K562 (cell line): ENCODE measurements at regions of chr19 and their contacts with region 1.

Region 1: GRCh38 chr19:40370997-40371801 is 18.8 kb downstream of the HIPK4 start:
- DNase-seq: peak; percentile 89 to 92 (median 90)
- ATAC-seq: peak; percentile 99
- H3K4me3 ChIP-seq: no peak overlapping the region
- H3K27ac ChIP-seq: peak overlapping the region; percentile 31; the same call in 2 of the 3 replicates
- H3K4me1 ChIP-seq: peaks cover 27 to 46% of the 10 kb centered on the region in 2 experiments
- H3K27me3 ChIP-seq: no peaks in the 10 kb centered on the region
- CTCF ChIP-seq: no peak
- EP300 ChIP-seq: no peak; the same call in 1 of the 2 replicates
- POLR2A ChIP-seq: no peak
- RAD21 ChIP-seq: no peak

Region 2: DNA sequence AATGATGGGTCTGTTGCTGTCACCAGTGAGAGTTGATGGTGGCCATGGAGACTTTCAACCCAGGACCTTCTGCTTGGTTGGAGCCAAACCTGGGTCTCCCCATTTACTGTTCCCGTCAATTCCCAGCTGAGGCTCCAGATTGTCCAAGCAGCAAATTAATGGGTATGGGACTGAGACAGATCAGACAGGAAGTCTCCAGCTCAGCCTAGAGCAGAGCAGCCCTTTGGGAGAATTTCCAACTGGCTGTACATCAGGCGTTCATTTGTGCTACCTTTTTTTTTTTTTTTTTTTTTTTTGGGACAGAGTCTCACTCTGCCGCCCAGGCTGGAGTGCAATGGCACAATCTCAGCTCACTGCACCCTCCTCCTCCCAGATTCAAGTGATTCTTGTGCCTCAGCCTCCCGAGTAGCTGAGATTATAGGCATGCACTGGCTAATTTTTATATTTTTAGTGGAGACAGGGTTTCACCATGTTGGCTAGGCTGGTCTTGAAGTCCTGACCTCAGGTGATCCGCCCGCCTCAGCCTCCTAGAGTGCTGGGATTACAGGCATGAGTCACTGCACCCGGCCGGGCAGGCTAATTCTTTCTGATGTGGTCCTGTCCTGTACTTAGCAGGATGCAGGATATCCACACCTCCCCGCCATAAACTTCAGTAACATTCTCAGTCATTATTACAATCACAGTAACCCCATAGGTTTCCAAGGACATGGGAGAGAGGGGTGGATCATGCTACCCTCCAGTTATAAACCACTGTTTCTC is 170.7 kb before region 1 on chr19:
- CTCF ChIA-PET with region 1: no interaction called
- POLR2A ChIA-PET with region 1: no interaction called
- in situ Hi-C with region 1: no loop called
- intact Hi-C with region 1: no loop called
- DNase-seq: no peak
- ATAC-seq: no peak
- H3K4me3 ChIP-seq: no peak overlapping the region
- H3K27ac ChIP-seq: no peak overlapping the region
- H3K4me1 ChIP-seq: peaks cover 0 to 10% of the 10 kb centered on the region in 2 experiments; a peak in 2 of 5 replicates
- H3K27me3 ChIP-seq: no peaks in the 10 kb centered on the region
- CTCF ChIP-seq: no peak
- EP300 ChIP-seq: no peak
- POLR2A ChIP-seq: no peak
- RAD21 ChIP-seq: no peak

Region 3: GRCh38 chr19:40381321-40381720 is 10.1 kb after region 1 on chr19:
- CTCF ChIA-PET with region 1: no interaction called
- POLR2A ChIA-PET with region 1: interaction called, 19 read pairs
- in situ Hi-C with region 1: no loop called
- intact Hi-C with region 1: no loop called
- DNase-seq: no peak
- ATAC-seq: peak; percentile 32; the same call in 2 of the 3 replicates
- H3K4me3 ChIP-seq: no peak overlapping the region
- H3K27ac ChIP-seq: no peak overlapping the region
- H3K4me1 ChIP-seq: peaks cover 0 to 36% of the 10 kb centered on the region in 2 experiments; a peak in 2 of 5 replicates
- H3K27me3 ChIP-seq: peaks cover 0 to 6% of the 10 kb centered on the region in 2 experiments; a peak in 1 of 5 replicates
- CTCF ChIP-seq: peak in 2 of 3 experiments; percentile 8 to 28; a peak in 1 of 6 replicates
- EP300 ChIP-seq: no peak
- POLR2A ChIP-seq: no peak
- RAD21 ChIP-seq: no peak

Region 4: GRCh38 chr19:40452016-40452415 is 80.8 kb after region 1 on chr19:
- CTCF ChIA-PET with region 1: no interaction called
- POLR2A ChIA-PET with region 1: no interaction called
- in situ Hi-C with region 1: no loop called
- intact Hi-C with region 1: no loop called
- DNase-seq: no peak
- ATAC-seq: peak; percentile 34
- H3K4me3 ChIP-seq: no peak overlapping the region
- H3K27ac ChIP-seq: no peak overlapping the region
- H3K4me1 ChIP-seq: peaks cover 4 to 5% of the 10 kb centered on the region in 2 experiments; a peak in 3 of 5 replicates
- H3K27me3 ChIP-seq: no peaks in the 10 kb centered on the region
- CTCF ChIP-seq: no peak
- EP300 ChIP-seq: no peak
- POLR2A ChIP-seq: peak; percentile 42; the same call in 1 of the 2 replicates
- RAD21 ChIP-seq: no peak

Region 5: GRCh38 chr19:40502647-40503319 is 131.6 kb after region 1 on chr19:
- CTCF ChIA-PET with region 1: no interaction called
- POLR2A ChIA-PET with region 1: no interaction called
- in situ Hi-C with region 1: no loop called
- intact Hi-C with region 1: no loop called
- DNase-seq: peak in 3 of 4 experiments; percentile 23 to 40 (median 26)
- ATAC-seq: peak; percentile 64
- H3K4me3 ChIP-seq: no peak overlapping the region
- H3K27ac ChIP-seq: no peak overlapping the region
- H3K4me1 ChIP-seq: peaks cover 0 to 11% of the 10 kb centered on the region in 2 experiments; a peak in 2 of 5 replicates
- H3K27me3 ChIP-seq: peaks cover 0 to 8% of the 10 kb centered on the region in 2 experiments; a peak in 2 of 5 replicates
- CTCF ChIP-seq: 0 out of 6 replicates have a peak, but pooled peaks of 2 of the 3 experiments have one; percentile 6 to 16
- EP300 ChIP-seq: no peak
- POLR2A ChIP-seq: no peak
- RAD21 ChIP-seq: no peak